GM10248 (cell line): ENCODE measurements at regions of chr1 and their contacts with region 1.

Region 1: GRCh38 chr1:57615956-57616355 is 192.1 kb upstream of the DAB1 start:
- DNase-seq: no peak
- CTCF ChIP-seq: no peak

Region 2: DNA sequence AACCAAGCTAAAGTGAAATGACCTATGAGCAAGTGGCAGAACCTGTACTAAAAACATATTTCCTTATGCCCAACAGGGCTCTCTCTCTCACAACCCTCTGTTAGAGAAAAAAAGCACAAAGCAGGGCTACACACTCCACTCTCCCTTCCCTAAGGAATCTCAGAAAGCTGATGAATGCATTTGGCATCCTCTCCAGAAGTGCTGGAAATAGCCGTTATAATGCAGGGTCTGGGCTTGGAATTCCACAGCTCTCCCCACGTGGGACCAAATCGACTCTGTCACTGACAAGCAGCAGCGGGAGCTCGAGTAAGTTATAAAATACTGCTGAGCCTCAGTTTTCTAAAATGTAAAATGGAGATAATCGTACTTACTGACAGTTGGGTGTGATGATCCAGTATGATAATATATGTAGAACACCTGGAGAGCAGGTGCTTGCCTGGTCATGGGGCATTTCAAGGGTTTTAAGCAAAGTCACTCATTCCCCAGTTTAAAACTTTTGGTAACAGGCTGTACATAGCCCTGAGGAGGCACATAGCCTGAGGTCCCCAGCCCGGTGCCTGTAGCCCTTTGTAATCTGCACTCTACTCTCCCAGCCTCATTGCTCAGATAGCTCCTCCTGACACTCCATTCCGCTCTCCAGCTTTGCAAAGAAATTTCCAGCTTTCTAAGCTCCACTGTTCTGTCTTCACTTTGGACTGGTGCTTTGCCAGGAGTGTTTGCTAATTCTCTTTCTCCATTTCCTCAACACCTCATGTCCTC is 16.5 kb before region 1 on chr1:
- CTCF ChIA-PET with region 1: interaction called, 20 read pairs
- POLR2A ChIA-PET with region 1: no interaction called
- DNase-seq: no peak
- CTCF ChIP-seq: no peak

Region 3: GRCh38 chr1:57637155-57637554 is 21.2 kb after region 1 on chr1:
- CTCF ChIA-PET with region 1: no interaction called
- POLR2A ChIA-PET with region 1: no interaction called
- DNase-seq: no peak
- CTCF ChIP-seq: no peak